Dorsolateral prefrontal cortex (tissue), 120 donors: ENCODE measurements at regions of chr19 and their contacts with region 1.

Region 1: DNA sequence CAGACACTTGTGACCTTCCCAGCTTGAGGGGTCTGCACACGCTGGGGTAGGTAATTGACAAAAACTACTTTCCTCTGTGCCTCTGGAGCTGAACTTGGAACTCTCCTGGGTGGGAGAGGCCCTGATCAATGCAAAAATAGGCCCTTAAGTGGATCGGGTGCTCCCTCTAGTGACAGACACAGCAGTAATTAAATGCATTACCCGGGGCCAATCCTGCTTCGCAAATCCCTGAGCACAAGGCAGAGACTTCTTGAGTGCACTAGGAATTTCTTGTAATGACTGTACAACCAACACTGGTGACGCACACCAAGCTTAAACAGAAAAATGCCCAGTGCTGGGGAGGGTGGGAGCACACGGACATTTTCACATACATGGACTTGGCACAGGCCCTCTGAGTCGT is 10.6 kb upstream of the UBE2S start:
- DNase-seq: peak in 7 of 10 donors; percentile 29 to 73 (median 58)
- H3K4me3 ChIP-seq: no peak overlapping the region
- H3K27ac ChIP-seq: peak overlapping the region in 37 of 59 donors; percentile 1 to 100 (median 85)
- H3K27me3 ChIP-seq: peaks cover 0 to 3% (median 0%) of the 10 kb centered on the region in 45 donors
- CTCF ChIP-seq: peak; percentile 32 to 87 (median 73)

Region 2: GRCh38 chr19:55452749-55453346 is 34.7 kb after region 1 on chr19:
- intact Hi-C with region 1: loop called in 1 of 2 experiments (anchors 5 kb)
- DNase-seq: peak; percentile 89 to 97 (median 96)
- H3K4me3 ChIP-seq: peak overlapping the region; percentile 40 to 89 (median 74)
- H3K27ac ChIP-seq: peak overlapping the region in 58 of 59 donors; percentile 33 to 96 (median 88)
- H3K27me3 ChIP-seq: peaks cover 0 to 6% (median 0%) of the 10 kb centered on the region in 45 donors
- CTCF ChIP-seq: peak in 54 of 56 donors; percentile 10 to 73 (median 50)